Calu3 (cell line): ENCODE measurements at regions of chrX and their contacts with region 1.

Region 1: DNA sequence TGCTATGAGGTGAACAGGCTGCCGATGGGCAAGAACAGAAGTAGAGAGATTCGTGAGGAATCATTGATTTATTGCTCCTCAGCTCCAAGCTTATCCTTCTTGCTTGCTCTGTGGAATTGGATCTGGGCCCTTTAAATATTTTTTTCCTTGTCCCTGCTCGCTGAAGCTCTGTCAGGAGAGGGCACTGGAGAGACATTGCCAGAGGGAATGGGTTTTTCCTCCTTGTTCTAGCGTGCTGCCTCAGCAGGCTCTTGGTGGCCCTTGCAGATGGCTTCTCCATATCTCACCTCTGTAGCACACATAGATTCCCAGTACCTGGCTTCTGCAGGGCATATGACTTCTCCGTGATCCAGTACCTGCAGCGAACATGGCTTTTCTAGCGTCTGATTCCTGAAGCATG is 67.4 kb downstream of the CNGA2 start:
- DNase-seq: peak; percentile 39
- H3K4me3 Mint-ChIP-seq: no peak overlapping the region
- H3K27ac Mint-ChIP-seq: no peak overlapping the region
- H3K4me1 Mint-ChIP-seq: no peaks in the 10 kb centered on the region
- H3K27me3 Mint-ChIP-seq: peaks cover 15% of the 10 kb centered on the region
- CTCF ChIP-seq: no peak

Region 2: GRCh38 chrX:151516538-151517187 is 285.3 kb before region 1 on chrX:
- CTCF ChIA-PET with region 1: no interaction called
- intact Hi-C with region 1: no loop called
- DNase-seq: no peak
- H3K4me3 Mint-ChIP-seq: no peak overlapping the region
- H3K27ac Mint-ChIP-seq: no peak overlapping the region
- H3K4me1 Mint-ChIP-seq: no peaks in the 10 kb centered on the region
- H3K27me3 Mint-ChIP-seq: no peaks in the 10 kb centered on the region
- CTCF ChIP-seq: no peak

Region 3: DNA sequence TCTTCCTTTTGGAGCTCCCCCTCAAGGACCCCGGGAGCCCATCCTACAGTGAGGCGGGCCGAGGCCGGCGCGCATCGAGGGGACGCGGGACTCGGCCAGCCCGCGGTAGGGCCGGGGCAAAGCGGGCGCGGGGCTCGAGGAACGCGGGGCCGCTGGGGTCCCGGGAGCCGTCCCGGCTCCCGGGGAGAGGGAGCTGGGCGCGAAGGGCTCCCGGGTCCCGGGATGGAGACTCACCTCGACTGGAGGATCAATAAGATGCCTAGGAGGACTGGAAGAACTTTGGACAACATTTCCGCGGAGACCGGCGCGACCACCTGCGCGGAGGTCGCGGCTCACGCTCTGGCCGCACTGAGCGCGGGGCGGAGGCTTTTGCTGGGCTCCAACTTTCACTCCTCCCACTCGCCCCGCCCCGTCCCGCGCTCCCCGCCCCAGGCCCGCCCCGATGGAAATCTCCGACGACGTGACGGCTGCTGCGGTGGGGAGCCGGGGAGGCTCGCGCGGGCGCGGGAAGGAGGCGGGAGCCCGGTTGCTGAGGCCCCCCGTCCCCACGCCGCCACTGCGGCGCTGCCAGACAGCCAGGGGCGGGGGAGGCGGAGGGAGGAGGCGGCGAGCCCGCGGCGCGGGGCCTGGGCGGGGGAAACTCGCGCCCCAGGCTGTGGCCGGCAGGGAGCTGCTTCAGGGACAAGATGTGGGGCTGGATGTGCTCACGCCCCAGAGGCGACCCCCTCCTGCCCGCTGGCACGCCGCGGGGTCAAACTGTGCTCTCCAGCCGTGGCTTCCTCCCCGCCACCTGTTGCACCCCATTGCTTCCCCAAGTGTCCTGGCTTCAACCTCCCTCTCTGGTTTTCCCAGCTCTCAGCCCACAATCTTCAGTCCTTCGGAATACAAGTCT is 172.6 kb after region 1 on chrX and contains the start of gene GABRE:
- CTCF ChIA-PET with region 1: interaction called, 3 read pairs
- intact Hi-C with region 1: loop called (anchors 5 kb)
- DNase-seq: peak; percentile 69
- H3K4me3 Mint-ChIP-seq: peak within 1 kb of the TSS; percentile 81
- H3K27ac Mint-ChIP-seq: peak within 1 kb of the TSS; percentile 80
- H3K4me1 Mint-ChIP-seq: peaks cover 26% of the 10 kb centered on the region
- H3K27me3 Mint-ChIP-seq: no peaks in the 10 kb centered on the region
- CTCF ChIP-seq: no peak
- total RNA-seq, gene GABRE: 60.5 and 71.9 TPM in 2 replicates

Region 4: DNA sequence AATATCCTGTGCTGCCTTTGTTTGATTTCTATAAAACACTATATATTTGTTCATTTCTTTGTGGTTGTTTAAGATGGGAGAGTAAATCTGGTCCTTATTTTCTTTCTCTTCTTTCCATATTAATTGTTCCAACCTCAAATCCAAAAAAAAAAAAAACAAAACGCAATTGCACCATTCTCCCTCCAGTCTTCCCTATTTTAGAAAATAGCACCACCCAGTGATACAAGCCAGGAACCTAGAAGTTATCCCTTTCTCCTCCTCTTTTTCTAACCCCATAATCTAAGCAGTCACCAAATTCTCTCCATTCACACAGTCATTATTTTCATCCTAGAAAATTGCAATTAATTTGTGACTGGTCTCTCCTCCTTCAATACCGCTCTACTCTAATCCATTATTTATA is 541.3 kb after region 1 on chrX:
- CTCF ChIA-PET with region 1: no interaction called
- intact Hi-C with region 1: loop called (anchors 2 kb)
- DNase-seq: no peak
- H3K4me3 Mint-ChIP-seq: no peak overlapping the region
- H3K27ac Mint-ChIP-seq: no peak overlapping the region
- H3K4me1 Mint-ChIP-seq: no peaks in the 10 kb centered on the region
- H3K27me3 Mint-ChIP-seq: no peaks in the 10 kb centered on the region
- CTCF ChIP-seq: no peak